Mammary epithelial cell (primary cell): ENCODE measurements at regions of chr1 and their contacts with region 1.

Region 1: DNA sequence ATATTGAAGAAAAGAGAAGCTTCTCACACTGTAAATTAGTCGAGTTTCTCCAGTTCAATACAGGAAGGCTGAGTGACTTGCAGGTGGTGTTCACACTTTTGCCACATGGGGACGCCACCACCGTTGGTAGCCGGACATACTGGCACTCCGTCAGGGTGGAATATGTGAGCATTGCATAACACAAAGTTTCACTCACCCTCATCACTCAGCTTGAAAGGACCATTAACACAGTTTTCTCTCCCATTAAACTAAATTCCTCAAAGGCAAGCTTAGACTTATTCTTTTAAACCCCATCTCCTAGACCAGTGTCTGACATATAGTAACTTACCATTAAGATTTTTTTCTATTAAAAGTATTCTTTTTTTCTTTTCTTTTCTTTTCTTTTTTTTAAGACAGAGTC is 105.3 kb upstream of the SERBP1 start:
- DNase-seq: peak; percentile 78
- H3K4me3 ChIP-seq: no peak overlapping the region
- H3K27ac ChIP-seq: peak overlapping the region; percentile 18
- H3K4me1 ChIP-seq: peaks cover 25% of the 10 kb centered on the region
- H3K27me3 ChIP-seq: no peaks in the 10 kb centered on the region
- CTCF ChIP-seq: peak; percentile 100

Region 2: GRCh38 chr1:67570473-67571143 is 35.1 kb after region 1 on chr1:
- CTCF ChIA-PET with region 1: no interaction called
- dilution Hi-C with region 1: loop called (anchors 5 kb)
- in situ Hi-C with region 1: no loop called
- intact Hi-C with region 1: no loop called
- DNase-seq: peak; percentile 99
- H3K4me3 ChIP-seq: no peak overlapping the region
- H3K27ac ChIP-seq: peak overlapping the region; percentile 97
- H3K4me1 ChIP-seq: peaks cover 53% of the 10 kb centered on the region
- H3K27me3 ChIP-seq: no peaks in the 10 kb centered on the region
- CTCF ChIP-seq: no peak

Region 3: GRCh38 chr1:67749844-67750689 is 214.6 kb after region 1 on chr1:
- CTCF ChIA-PET with region 1: no interaction called
- dilution Hi-C with region 1: no loop called
- in situ Hi-C with region 1: loop called (anchors 5 kb)
- intact Hi-C with region 1: no loop called
- DNase-seq: peak; percentile 98
- H3K4me3 ChIP-seq: peak overlapping the region; percentile 19 to 30 (median 21)
- H3K27ac ChIP-seq: peak overlapping the region; percentile 100
- H3K4me1 ChIP-seq: peaks cover 81% of the 10 kb centered on the region
- H3K27me3 ChIP-seq: no peaks in the 10 kb centered on the region
- CTCF ChIP-seq: no peak

Region 4: DNA sequence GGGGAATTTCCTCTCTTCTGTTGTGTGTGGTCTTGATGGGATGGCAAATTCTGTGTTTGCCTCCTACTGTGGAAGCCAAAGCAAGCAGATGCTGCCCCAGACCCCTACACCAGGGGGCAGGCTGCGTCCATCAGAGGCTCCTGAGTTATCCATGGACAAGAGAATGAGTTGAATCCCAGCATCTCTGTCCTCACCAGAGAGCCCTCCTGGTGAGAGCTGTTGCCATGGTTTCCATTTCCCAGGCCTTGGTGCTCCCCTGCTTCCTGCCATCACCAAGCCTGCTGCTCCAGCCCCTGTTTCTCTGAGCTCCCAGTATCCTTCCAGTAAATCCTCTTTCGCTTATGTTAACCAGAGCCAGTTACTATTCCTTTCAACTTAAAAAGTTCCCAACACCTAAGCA is 318.2 kb after region 1 on chr1:
- CTCF ChIA-PET with region 1: no interaction called
- dilution Hi-C with region 1: no loop called
- in situ Hi-C with region 1: loop called (anchors 10 to 25 kb)
- intact Hi-C with region 1: loop called (anchors 1 kb)
- DNase-seq: peak; percentile 62
- H3K4me3 ChIP-seq: no peak overlapping the region
- H3K27ac ChIP-seq: no peak overlapping the region
- H3K4me1 ChIP-seq: peaks cover 15% of the 10 kb centered on the region
- H3K27me3 ChIP-seq: no peaks in the 10 kb centered on the region
- CTCF ChIP-seq: peak; percentile 95 to 98

Region 5: GRCh38 chr1:68111519-68112436 is 576.3 kb after region 1 on chr1:
- CTCF ChIA-PET with region 1: no interaction called
- dilution Hi-C with region 1: no loop called
- in situ Hi-C with region 1: loop called in 1 of 2 experiments (anchors 25 kb)
- intact Hi-C with region 1: loop called (anchors 2 kb)
- DNase-seq: peak; percentile 63
- H3K4me3 ChIP-seq: no peak overlapping the region
- H3K27ac ChIP-seq: no peak overlapping the region
- H3K4me1 ChIP-seq: peaks cover 27% of the 10 kb centered on the region
- H3K27me3 ChIP-seq: no peaks in the 10 kb centered on the region
- CTCF ChIP-seq: peak; percentile 64 to 75

Region 6: GRCh38 chr1:68346188-68346808 is 810.8 kb after region 1 on chr1:
- CTCF ChIA-PET with region 1: no interaction called
- dilution Hi-C with region 1: no loop called
- in situ Hi-C with region 1: no loop called
- intact Hi-C with region 1: loop called (anchors 10 kb)
- DNase-seq: peak; percentile 18
- H3K4me3 ChIP-seq: no peak overlapping the region
- H3K27ac ChIP-seq: no peak overlapping the region
- H3K4me1 ChIP-seq: no peaks in the 10 kb centered on the region
- H3K27me3 ChIP-seq: no peaks in the 10 kb centered on the region
- CTCF ChIP-seq: peak; percentile 43 to 48